SK-N-SH (cell line): ENCODE measurements at regions of chr5 and their contacts with region 1.

Region 1: GRCh38 chr5:141701360-141702119 is 19.5 kb upstream of the ARAP3 start:
- DNase-seq: no peak
- H3K4me3 ChIP-seq: peak overlapping the region in 1 of 2 experiments; percentile 46; a peak in 1 of 4 replicates
- H3K27ac ChIP-seq: no peak overlapping the region
- H3K4me1 ChIP-seq: peaks cover 0 to 14% of the 10 kb centered on the region in 2 experiments; a peak in 1 of 4 replicates
- H3K27me3 ChIP-seq: peaks cover 70% of the 10 kb centered on the region
- CTCF ChIP-seq: no peak
- EP300 ChIP-seq: no peak
- RAD21 ChIP-seq: no peak

Region 2: DNA sequence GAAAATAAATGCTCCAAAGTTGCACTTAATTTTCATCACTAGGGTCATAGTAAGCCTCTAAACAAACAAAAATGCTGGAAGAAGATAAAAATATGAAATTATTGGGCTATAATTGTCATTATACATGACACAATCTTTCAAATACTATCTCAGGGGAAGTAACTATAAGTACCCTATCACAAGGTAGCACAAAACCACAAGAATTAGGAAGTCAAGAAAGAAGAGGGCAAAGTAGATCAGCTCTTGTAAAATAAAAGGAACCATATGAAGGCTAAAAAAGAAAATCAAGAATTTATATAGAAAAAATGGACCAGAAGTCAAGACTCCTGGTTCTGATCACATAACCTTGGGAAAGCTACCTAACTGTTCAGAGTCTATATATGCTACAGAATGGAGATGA is 130.9 kb before region 1 on chr5:
- CTCF ChIA-PET with region 1: no interaction called
- POLR2A ChIA-PET with region 1: no interaction called
- DNase-seq: no peak
- H3K4me3 ChIP-seq: no peak overlapping the region
- H3K27ac ChIP-seq: no peak overlapping the region
- H3K4me1 ChIP-seq: no peaks in the 10 kb centered on the region
- H3K27me3 ChIP-seq: no peaks in the 10 kb centered on the region
- CTCF ChIP-seq: no peak
- EP300 ChIP-seq: no peak
- RAD21 ChIP-seq: no peak

Region 3: DNA sequence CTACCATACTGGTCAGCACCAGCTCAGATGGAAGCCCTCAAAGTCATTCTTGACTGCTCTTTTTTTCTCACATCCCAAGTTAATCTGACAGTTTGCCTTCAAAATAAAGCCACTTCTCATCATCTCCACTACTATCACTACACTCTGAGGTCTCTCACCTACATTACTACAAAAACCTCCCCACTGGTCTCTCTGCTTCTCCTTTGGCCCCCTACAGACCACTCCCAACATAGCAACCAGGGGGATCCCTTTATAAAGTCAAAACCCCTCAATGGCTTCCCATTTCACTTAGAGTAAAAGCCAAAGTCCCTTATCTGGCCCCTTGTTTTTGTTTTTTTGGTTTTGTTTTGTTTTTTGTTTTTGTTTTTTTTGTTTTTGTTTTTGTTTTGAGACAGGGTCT is 24.1 kb before region 1 on chr5:
- CTCF ChIA-PET with region 1: no interaction called
- POLR2A ChIA-PET with region 1: no interaction called
- DNase-seq: peak; percentile 72
- H3K4me3 ChIP-seq: peak overlapping the region in 1 of 2 experiments; percentile 23; a peak in 1 of 4 replicates
- H3K27ac ChIP-seq: no peak overlapping the region
- H3K4me1 ChIP-seq: peaks cover 15 to 23% of the 10 kb centered on the region in 2 experiments; a peak in 2 of 4 replicates
- H3K27me3 ChIP-seq: no peaks in the 10 kb centered on the region
- CTCF ChIP-seq: peak; percentile 40
- EP300 ChIP-seq: no peak
- RAD21 ChIP-seq: 0 out of 2 replicates have a peak, but pooled peaks have one; percentile 7

Region 4: DNA sequence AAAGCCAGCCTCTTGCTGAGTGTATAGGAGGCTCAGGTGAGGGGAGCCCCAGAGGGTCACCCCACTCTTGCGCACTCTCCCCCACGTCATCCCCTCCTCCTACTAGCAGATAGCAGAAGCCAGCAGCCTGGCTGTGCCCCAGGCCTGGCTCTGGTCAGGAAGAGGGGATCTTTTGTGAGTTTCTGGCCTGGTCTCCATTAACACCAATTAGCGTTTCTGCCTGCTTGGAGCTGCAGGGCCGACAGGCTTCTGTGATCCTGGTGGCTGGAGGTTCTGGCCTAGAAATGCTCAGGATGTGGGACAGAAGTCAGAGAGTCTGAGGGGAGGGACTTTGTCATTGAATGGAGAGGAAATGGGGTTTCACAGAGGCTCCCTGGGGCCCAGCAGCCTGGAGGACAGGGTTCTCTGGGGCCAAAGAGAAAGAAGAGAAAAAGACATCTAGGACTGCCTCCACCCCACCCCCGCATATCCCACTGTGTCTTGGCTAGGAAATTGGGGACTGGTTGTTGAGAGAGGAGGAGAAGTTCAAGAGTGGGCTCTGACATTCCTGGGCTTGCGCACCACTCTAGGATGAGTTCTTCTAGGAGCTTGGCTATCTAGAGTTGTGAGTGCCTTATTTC is 28.0 kb after region 1 on chr5:
- CTCF ChIA-PET with region 1: interaction called, 34 read pairs
- POLR2A ChIA-PET with region 1: interaction called, 3 read pairs
- DNase-seq: peak; percentile 78
- H3K4me3 ChIP-seq: no peak overlapping the region
- H3K27ac ChIP-seq: peak overlapping the region in 1 of 2 experiments; percentile 96; a peak in 2 of 4 replicates
- H3K4me1 ChIP-seq: peaks cover 0 to 51% of the 10 kb centered on the region in 2 experiments; a peak in 2 of 4 replicates
- H3K27me3 ChIP-seq: peaks cover 10% of the 10 kb centered on the region
- CTCF ChIP-seq: no peak
- EP300 ChIP-seq: peak in 1 of 2 experiments; percentile 97; a peak in 2 of 4 replicates
- RAD21 ChIP-seq: peak; percentile 41

Region 5: GRCh38 chr5:141787376-141787775 is 85.8 kb after region 1 on chr5:
- CTCF ChIA-PET with region 1: interaction called, 17 read pairs
- POLR2A ChIA-PET with region 1: no interaction called
- DNase-seq: no peak
- H3K4me3 ChIP-seq: no peak overlapping the region
- H3K27ac ChIP-seq: no peak overlapping the region
- H3K4me1 ChIP-seq: peaks cover 0 to 20% of the 10 kb centered on the region in 2 experiments; a peak in 1 of 4 replicates
- H3K27me3 ChIP-seq: peaks cover 14% of the 10 kb centered on the region; the same call in 1 of the 2 replicates
- CTCF ChIP-seq: no peak
- EP300 ChIP-seq: no peak
- RAD21 ChIP-seq: no peak

Region 6: GRCh38 chr5:141835928-141836670 is 134.6 kb after region 1 on chr5:
- CTCF ChIA-PET with region 1: interaction called, 18 read pairs
- POLR2A ChIA-PET with region 1: no interaction called
- DNase-seq: no peak
- H3K4me3 ChIP-seq: no peak overlapping the region
- H3K27ac ChIP-seq: no peak overlapping the region
- H3K4me1 ChIP-seq: peaks cover 0 to 59% of the 10 kb centered on the region in 2 experiments; a peak in 2 of 4 replicates
- H3K27me3 ChIP-seq: peaks cover 17% of the 10 kb centered on the region; the same call in 1 of the 2 replicates
- CTCF ChIP-seq: no peak
- EP300 ChIP-seq: no peak
- RAD21 ChIP-seq: no peak

Region 7: DNA sequence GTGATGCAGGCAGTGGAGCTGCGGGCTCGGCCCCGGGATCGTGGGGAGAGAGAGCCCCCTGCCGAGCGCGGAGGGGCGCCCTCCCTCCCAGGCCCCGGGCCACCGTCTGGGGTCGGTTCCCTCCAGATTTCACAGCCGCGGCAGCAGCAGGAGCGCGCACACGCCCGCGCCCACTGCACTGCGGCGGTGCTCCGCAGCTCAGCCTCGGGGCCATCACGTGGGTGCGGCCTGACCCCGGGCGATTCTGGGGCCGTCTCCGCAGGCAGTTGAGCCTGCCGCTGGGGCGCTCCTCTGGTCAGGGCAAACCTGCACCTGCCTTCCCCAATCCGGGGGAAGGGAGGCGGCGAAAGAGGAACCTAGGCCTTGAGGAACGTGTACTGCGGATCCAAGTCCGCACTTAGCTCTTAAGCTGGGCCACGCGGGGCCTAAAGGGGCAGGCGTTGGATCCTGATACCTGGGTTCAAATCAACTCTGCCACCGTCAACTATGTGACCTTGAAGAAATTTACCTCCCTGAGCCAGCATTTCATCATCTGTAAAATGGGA is 212.7 kb after region 1 on chr5:
- CTCF ChIA-PET with region 1: interaction called, 30 read pairs
- POLR2A ChIA-PET with region 1: no interaction called
- DNase-seq: peak; percentile 94
- H3K4me3 ChIP-seq: peak overlapping the region in 1 of 2 experiments; percentile 4; a peak in 1 of 4 replicates
- H3K27ac ChIP-seq: no peak overlapping the region
- H3K4me1 ChIP-seq: peaks cover 0 to 4% of the 10 kb centered on the region in 2 experiments; a peak in 1 of 4 replicates
- H3K27me3 ChIP-seq: no peaks in the 10 kb centered on the region; the same call in 1 of the 2 replicates
- CTCF ChIP-seq: no peak
- EP300 ChIP-seq: no peak
- RAD21 ChIP-seq: peak; percentile 75